PC-9 (cell line): ENCODE measurements at regions of chr2 and their contacts with region 1.

Region 1: GRCh38 chr2:185628985-185629384 is 109.6 kb upstream of the FSIP2 start:
- DNase-seq: no peak
- H3K4me3 ChIP-seq: no peak overlapping the region
- H3K27ac ChIP-seq: no peak overlapping the region
- H3K4me1 ChIP-seq: no peaks in the 10 kb centered on the region
- H3K27me3 ChIP-seq: no peaks in the 10 kb centered on the region
- CTCF ChIP-seq: peak; percentile 57

Region 2: DNA sequence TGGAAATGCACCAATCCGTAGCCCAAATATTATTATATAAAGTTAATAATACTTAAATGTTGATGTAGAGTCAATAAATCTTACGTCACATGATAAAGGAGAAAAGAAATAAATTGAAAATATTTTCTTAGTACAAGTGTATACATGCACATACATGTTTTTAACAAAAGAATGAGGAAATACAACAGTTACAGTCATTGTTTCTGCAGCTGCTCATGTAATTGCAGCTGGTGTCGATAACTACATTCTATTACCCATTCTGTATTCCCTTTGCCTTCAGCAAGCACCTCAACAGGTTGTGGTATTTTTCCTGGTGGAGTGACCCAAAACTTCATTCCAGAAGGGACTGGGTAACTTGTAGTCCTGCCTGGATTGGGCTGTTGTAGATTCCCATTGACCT is 268.2 kb before region 1 on chr2:
- CTCF ChIA-PET with region 1: no interaction called
- POLR2A ChIA-PET with region 1: no interaction called
- intact Hi-C with region 1: no loop called
- DNase-seq: no peak
- H3K4me3 ChIP-seq: no peak overlapping the region
- H3K27ac ChIP-seq: no peak overlapping the region
- H3K4me1 ChIP-seq: no peaks in the 10 kb centered on the region
- H3K27me3 ChIP-seq: no peaks in the 10 kb centered on the region
- CTCF ChIP-seq: no peak

Region 3: DNA sequence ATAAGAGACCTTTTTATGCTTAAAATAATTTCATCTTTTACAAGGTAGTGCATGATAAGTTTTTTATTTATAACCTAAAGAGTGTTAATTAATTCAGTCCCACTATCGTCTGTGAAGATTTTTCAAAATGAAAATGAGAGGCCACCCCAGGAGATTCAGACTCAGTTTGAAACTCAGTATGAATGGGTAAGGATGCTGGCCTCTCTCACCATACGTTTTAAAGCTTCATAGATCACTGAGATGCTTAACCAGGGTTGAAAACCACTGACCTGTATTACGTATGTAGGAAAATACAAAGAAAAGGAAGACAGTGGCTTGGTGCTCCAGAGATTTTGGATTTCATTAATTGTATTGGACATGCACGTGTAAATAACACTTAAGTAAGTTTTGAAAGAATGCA is 388.3 kb after region 1 on chr2:
- CTCF ChIA-PET with region 1: no interaction called
- POLR2A ChIA-PET with region 1: interaction called, 10 read pairs
- intact Hi-C with region 1: no loop called
- DNase-seq: no peak
- H3K4me3 ChIP-seq: no peak overlapping the region
- H3K27ac ChIP-seq: no peak overlapping the region
- H3K4me1 ChIP-seq: no peaks in the 10 kb centered on the region
- H3K27me3 ChIP-seq: no peaks in the 10 kb centered on the region
- CTCF ChIP-seq: no peak